T-cell (primary cell): ENCODE measurements at regions of chr22 and their contacts with region 1.

Region 1: GRCh38 chr22:38793721-38794466 is at the start of gene DNAL4:
- DNase-seq: peak; percentile 80 to 96 (median 89)
- ATAC-seq: peak; percentile 97 to 99 (median 98)
- H3K4me3 ChIP-seq: peak within 1 kb of the TSS; percentile 64 to 65
- H3K4me3 Mint-ChIP-seq: peak within 1 kb of the TSS; percentile 80 to 91 (median 86)
- H3K27ac ChIP-seq: peak within 1 kb of the TSS; percentile 8
- H3K27ac Mint-ChIP-seq: peak within 1 kb of the TSS; percentile 87 to 88
- H3K4me1 ChIP-seq: peaks cover 8 to 27% of the 10 kb centered on the region in 2 experiments
- H3K4me1 Mint-ChIP-seq: peaks cover 23 to 33% (median 27%) of the 10 kb centered on the region in 3 donors
- H3K27me3 ChIP-seq: peaks cover 0 to 26% of the 10 kb centered on the region in 2 experiments
- H3K27me3 Mint-ChIP-seq: peaks cover 0 to 28% of the 10 kb centered on the region in 2 donors
- total RNA-seq, gene DNAL4: 5.4 to 13.0 (median 8.8) TPM

Region 2: DNA sequence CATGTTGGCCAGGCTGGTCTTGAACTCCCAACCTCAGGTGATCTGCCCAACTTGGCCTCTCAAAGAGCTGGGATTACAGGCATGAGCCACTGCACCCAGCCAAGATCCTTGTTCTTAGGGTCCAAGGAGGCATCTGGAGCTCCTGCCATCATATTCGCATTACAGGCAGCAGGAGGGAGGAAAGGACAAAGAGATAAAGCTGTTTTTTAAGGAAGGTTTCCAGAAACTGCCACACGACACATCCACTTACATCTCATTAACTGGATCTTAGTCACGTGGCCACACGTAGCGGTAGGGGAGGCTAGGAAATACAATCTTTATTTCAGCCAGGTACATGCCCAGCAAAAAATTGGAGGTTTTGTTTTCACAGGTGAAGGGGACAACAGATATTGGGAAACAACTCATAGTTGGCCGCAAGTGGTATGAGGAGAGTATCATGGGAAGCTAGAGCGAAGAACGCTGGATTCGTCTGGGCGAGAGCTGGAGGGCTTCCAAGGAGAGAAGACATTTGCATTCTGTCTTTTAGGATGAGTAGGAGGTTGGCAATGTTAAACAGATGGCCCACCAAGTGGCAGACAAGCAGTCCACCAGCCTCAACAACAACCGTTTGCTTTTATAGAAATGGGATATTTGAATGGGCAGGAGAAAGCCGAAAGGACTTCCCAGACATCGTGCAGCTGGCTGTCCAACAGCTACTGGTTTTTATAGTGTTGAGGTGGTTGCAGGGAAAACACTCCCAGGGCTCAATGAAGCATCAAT is 184.7 kb before region 1 on chr22:
- CTCF ChIA-PET with region 1: no interaction called
- POLR2A ChIA-PET with region 1: no interaction called
- DNase-seq: no peak
- ATAC-seq: no peak
- H3K4me3 ChIP-seq: no peak overlapping the region
- H3K4me3 Mint-ChIP-seq: no peak overlapping the region
- H3K27ac ChIP-seq: no peak overlapping the region
- H3K27ac Mint-ChIP-seq: no peak overlapping the region
- H3K4me1 ChIP-seq: no peaks in the 10 kb centered on the region
- H3K4me1 Mint-ChIP-seq: no peaks in the 10 kb centered on the region
- H3K27me3 ChIP-seq: peaks cover 0 to 5% of the 10 kb centered on the region in 2 experiments
- H3K27me3 Mint-ChIP-seq: peaks cover 0 to 3% of the 10 kb centered on the region in 2 donors

Region 3: GRCh38 chr22:38766076-38766777 is 27.7 kb before region 1 on chr22:
- CTCF ChIA-PET with region 1: interaction called in 1 of 2 experiments, 12 read pairs
- POLR2A ChIA-PET with region 1: no interaction called
- DNase-seq: peak in 20 of 35 experiments; percentile 20 to 69 (median 30)
- ATAC-seq: peak; percentile 47 to 83 (median 62)
- H3K4me3 ChIP-seq: no peak overlapping the region
- H3K4me3 Mint-ChIP-seq: no peak overlapping the region
- H3K27ac ChIP-seq: no peak overlapping the region
- H3K27ac Mint-ChIP-seq: no peak overlapping the region
- H3K4me1 ChIP-seq: peaks cover 0 to 16% of the 10 kb centered on the region in 2 experiments
- H3K4me1 Mint-ChIP-seq: peaks cover 0 to 13% (median 8%) of the 10 kb centered on the region in 3 donors
- H3K27me3 ChIP-seq: peaks cover 0 to 11% of the 10 kb centered on the region in 2 experiments
- H3K27me3 Mint-ChIP-seq: no peaks in the 10 kb centered on the region

Region 4: GRCh38 chr22:38782402-38783094 is 11.3 kb before region 1 on chr22:
- CTCF ChIA-PET with region 1: no interaction called
- POLR2A ChIA-PET with region 1: no interaction called
- DNase-seq: no peak
- ATAC-seq: no peak
- H3K4me3 ChIP-seq: no peak overlapping the region
- H3K4me3 Mint-ChIP-seq: no peak overlapping the region
- H3K27ac ChIP-seq: no peak overlapping the region
- H3K27ac Mint-ChIP-seq: no peak overlapping the region
- H3K4me1 ChIP-seq: peaks cover 0 to 6% of the 10 kb centered on the region in 2 experiments
- H3K4me1 Mint-ChIP-seq: peaks cover 12 to 22% (median 18%) of the 10 kb centered on the region in 3 donors
- H3K27me3 ChIP-seq: no peaks in the 10 kb centered on the region
- H3K27me3 Mint-ChIP-seq: no peaks in the 10 kb centered on the region